Right cardiac atrium (tissue), 5 donors: ENCODE measurements at regions of chr11 and their contacts with region 1.

Region 1: DNA sequence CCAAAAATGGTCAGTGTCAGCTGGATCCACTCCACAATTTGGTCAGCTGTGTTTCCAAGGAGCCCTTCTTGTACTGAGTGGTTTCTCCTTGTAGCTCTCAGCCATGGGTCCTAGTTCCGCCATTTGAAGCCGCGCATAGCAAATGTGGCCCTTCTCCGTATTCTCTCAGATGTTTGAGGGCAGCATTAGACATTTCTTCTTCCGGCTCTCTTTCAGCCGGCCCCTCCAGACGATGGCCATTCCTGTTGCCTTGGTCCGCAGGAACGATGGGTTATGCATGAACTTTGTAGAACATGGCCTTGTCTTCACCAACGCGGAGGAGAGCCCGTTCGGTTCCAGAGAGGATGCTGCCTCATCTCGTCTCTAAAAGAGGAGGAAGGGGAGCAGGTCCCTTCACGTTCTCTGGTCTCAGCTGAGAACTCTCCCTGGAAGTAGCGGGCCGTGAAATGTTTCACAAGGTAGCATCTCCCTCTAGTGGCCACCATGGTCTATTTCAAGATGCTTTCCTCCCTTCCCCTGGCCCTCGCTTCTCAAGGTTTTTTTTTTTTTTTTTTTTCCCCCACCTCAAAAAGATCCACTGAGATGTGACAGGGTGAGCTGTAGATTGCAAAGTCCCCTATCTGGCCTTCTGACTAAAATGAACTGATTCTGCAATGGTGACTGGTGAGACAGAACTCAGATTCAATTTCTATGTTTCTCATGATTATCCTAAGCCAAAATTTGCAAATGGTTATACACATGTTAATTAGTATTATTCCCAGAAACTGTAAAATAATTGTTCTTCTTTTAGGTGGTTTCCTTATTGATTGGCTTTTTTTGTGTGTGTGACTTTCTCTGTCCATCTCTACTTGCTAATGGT is 19.8 kb upstream of the PLET1 start:
- DNase-seq: peak in 2 of 3 donors; percentile 46 to 69
- ATAC-seq: peak; percentile 90 to 91
- H3K4me3 ChIP-seq: peak overlapping the region; percentile 53
- H3K27ac ChIP-seq: no peak overlapping the region
- H3K4me1 ChIP-seq: no peaks in the 10 kb centered on the region
- H3K27me3 ChIP-seq: no peaks in the 10 kb centered on the region

Region 2: GRCh38 chr11:112219476-112220232 is 60.8 kb before region 1 on chr11:
- intact Hi-C with region 1: loop called (anchors 2 to 5 kb)
- DNase-seq: no peak
- ATAC-seq: peak; percentile 89 to 94
- H3K4me3 ChIP-seq: no peak overlapping the region
- H3K27ac ChIP-seq: no peak overlapping the region
- H3K4me1 ChIP-seq: no peaks in the 10 kb centered on the region
- H3K27me3 ChIP-seq: no peaks in the 10 kb centered on the region

Region 3: GRCh38 chr11:112440518-112440917 is 160.0 kb after region 1 on chr11:
- intact Hi-C with region 1: loop called in 1 of 4 experiments (anchors 10 kb)
- DNase-seq: no peak
- ATAC-seq: no peak
- H3K4me3 ChIP-seq: no peak overlapping the region
- H3K27ac ChIP-seq: no peak overlapping the region
- H3K4me1 ChIP-seq: no peaks in the 10 kb centered on the region
- H3K27me3 ChIP-seq: no peaks in the 10 kb centered on the region

Region 4: DNA sequence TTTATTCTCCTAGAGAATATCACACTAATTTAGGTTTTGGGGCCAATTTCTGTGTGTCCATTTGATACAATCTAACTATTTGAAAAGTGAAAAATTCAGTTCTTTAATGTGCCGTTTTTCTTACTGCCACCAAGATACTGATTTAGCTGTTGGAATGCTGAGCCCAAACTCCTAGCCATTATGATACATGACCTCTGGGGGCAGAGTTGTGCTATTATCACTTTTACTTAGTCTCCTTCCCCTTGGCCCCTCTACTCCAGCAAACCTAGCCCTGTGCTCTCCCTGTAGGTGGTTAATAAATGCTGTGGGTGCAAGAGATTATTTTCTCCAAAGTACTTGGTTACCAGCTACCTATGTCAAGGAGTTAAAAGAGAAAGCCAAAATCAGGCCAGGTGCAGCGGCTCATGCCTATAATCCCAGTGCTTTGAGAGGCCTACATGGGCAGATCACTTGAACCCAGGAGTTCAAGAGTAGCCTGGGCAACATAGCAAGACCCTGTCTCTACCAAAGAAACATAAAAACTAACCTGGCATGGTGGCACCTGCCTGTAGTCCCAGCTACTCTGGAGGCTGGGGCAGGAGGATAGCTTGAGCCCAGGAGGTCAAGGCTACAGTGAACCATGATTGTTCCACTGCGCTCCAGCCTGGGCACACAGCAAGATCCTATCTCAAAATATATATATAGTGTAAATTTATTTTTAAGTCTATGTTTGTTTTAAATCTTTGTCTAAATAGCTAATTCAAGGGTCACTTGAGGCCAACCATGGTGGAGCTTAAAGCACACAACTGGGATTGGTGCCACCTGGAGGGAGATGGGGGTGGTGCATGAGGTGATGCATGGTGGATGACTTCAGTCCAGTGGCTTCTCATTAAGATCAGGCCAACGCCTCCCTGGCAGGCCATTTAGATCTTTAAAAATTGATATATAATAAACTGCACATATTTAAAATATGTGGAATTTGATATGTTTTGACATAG is 173.4 kb after region 1 on chr11:
- intact Hi-C with region 1: loop called in 3 of 4 experiments (anchors 5 to 10 kb)
- DNase-seq: peak in 2 of 3 donors; percentile 27 to 57
- ATAC-seq: no peak
- H3K4me3 ChIP-seq: no peak overlapping the region
- H3K27ac ChIP-seq: no peak overlapping the region
- H3K4me1 ChIP-seq: no peaks in the 10 kb centered on the region
- H3K27me3 ChIP-seq: no peaks in the 10 kb centered on the region

Region 5: DNA sequence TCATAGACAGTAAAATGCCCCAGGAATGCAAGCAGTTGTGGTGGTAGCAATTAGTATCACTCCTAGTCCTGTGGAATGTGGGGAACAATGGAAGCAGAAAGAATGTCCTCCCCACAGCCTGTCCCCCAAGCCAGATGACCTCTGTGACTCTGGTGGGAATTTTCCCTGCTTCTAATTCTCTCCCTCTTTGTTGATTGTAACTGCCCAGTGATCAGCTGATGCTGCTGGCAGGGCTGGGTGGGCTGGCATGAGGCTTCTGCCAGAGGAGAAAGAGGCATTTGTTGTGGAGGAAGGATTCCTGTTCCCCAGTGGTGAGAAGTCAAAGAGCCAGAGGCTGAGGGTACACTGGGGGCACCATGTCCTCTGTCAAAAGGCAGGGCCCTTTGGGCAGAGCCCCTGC is 564.0 kb after region 1 on chr11:
- intact Hi-C with region 1: no loop called
- DNase-seq: peak in 1 of 3 donors; percentile 35
- ATAC-seq: peak; percentile 37 to 66
- H3K4me3 ChIP-seq: no peak overlapping the region
- H3K27ac ChIP-seq: no peak overlapping the region
- H3K4me1 ChIP-seq: no peaks in the 10 kb centered on the region
- H3K27me3 ChIP-seq: no peaks in the 10 kb centered on the region

Region 6: DNA sequence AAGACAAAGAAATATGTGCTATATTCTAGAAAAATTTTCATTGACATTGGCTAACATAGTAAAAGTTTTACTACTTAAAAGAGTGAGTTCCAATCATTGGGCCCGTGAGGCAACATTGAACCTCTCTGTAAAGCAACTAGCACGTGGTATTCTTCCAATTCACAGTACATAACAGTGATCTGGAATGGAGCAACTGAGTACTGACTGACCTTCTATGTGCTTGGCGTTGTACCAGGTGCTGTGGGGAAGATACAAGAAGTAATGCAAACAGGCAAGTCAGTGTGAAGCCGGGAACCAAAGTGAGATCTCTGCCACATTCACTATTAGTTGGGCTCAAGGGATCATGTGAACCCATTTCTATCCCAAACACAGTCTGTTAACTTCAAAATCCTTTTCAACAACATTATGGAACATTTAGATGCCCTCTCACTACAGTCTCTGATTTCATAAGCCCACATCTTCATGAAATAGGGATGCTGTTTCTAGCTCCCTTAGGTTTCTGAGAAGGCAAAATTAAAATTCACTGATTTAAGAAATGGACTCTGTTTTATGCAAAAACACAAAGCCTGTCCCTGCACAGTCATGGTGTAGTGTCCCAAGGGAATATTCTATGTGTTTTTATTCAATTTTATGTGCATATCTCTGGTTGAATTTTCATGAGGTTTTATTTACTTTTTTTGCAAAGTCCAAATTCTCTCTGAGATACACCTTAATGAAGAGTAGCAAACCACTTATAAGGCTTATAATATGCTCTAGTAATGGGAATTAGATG is 618.9 kb after region 1 on chr11:
- intact Hi-C with region 1: no loop called
- DNase-seq: no peak
- ATAC-seq: no peak
- H3K4me3 ChIP-seq: no peak overlapping the region
- H3K27ac ChIP-seq: no peak overlapping the region
- H3K4me1 ChIP-seq: no peaks in the 10 kb centered on the region
- H3K27me3 ChIP-seq: no peaks in the 10 kb centered on the region

Region 7: DNA sequence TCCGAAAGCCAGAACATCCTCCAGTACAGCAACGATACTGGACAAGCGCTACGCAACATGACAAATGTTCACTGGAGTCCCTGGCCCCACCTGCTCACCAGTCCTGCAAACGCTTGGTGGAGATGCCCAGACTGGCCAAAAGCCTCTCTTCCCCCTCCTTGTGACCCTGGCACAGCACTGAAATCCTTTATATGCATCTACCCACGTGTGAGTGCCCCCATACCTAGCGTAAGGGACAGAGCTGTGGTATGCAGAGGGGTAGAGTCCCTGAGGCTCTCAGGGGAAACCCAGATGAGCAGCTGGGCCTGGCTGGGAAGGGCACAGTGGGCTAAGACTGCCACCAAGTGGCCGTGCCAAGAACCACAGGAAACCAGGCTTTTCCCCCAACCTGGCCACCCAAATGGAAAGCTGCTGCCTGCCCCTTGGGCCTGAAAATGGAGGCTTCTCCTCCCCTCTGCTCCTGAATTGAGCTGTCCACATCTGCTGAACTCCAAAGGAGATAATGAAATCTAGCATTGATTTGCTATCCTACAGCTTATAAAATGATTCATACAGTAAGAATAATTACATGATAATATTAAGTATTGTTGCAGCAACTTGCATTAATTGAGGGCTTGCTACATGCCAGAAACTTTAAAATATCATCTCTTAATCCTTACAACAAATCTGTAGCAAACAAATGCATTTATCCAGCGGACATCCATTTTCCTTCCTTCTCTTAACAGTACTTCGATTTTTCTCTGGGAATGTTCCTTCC is 1009.1 kb after region 1 on chr11:
- intact Hi-C with region 1: loop called in 2 of 4 experiments (anchors 5 to 10 kb)
- DNase-seq: peak; percentile 48 to 83 (median 75)
- ATAC-seq: peak; percentile 76 to 82
- H3K4me3 ChIP-seq: no peak overlapping the region
- H3K27ac ChIP-seq: no peak overlapping the region
- H3K4me1 ChIP-seq: no peaks in the 10 kb centered on the region
- H3K27me3 ChIP-seq: no peaks in the 10 kb centered on the region